ENCODE measurements at regions of chr21 and their contacts with region 1.

Region 1: GRCh38 chr21:38645282-38645681 is 147.0 kb upstream of the ERG start:
- DNase-seq: peak; percentile 96
- H3K4me3 ChIP-seq: no peak overlapping the region
- H3K27ac ChIP-seq: peak overlapping the region; percentile 95
- H3K4me1 ChIP-seq: peaks cover 26% of the 10 kb centered on the region
- H3K27me3 ChIP-seq: no peaks in the 10 kb centered on the region
- CTCF ChIP-seq: no peak

Region 2: GRCh38 chr21:38424305-38425019 is 220.8 kb before region 1 on chr21:
- CTCF ChIA-PET with region 1: no interaction called
- dilution Hi-C with region 1: no loop called
- in situ Hi-C with region 1: no loop called
- intact Hi-C with region 1: no loop called
- DNase-seq: no peak
- H3K4me3 ChIP-seq: no peak overlapping the region
- H3K27ac ChIP-seq: no peak overlapping the region
- H3K4me1 ChIP-seq: no peaks in the 10 kb centered on the region
- H3K27me3 ChIP-seq: no peaks in the 10 kb centered on the region
- CTCF ChIP-seq: no peak

Region 3: GRCh38 chr21:38478782-38479181 is 166.5 kb before region 1 on chr21:
- CTCF ChIA-PET with region 1: no interaction called
- dilution Hi-C with region 1: no loop called
- in situ Hi-C with region 1: no loop called
- intact Hi-C with region 1: loop called (anchors 1 kb)
- DNase-seq: peak; percentile 99
- H3K4me3 ChIP-seq: no peak overlapping the region
- H3K27ac ChIP-seq: peak overlapping the region; percentile 99
- H3K4me1 ChIP-seq: peaks cover 45% of the 10 kb centered on the region
- H3K27me3 ChIP-seq: no peaks in the 10 kb centered on the region
- CTCF ChIP-seq: no peak

Region 4: DNA sequence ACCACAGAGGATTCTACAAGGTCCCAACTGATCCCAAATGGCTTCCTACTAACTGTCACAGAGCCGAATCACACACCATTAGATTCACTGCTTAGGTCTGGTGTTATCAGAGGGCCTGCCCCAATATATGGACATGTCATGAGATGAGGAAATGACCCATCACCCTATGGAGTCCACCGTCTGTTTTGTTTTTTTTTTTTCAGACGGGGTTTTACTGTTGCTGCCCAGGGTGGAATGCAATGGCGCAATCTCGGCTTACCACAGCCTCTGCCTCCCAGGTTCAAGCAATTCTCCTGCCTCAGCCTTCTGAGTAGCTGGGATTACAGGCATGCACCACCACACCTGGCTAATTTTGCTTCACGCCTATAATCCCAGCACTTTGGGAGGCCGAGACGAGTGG is 76.7 kb after region 1 on chr21:
- CTCF ChIA-PET with region 1: no interaction called
- dilution Hi-C with region 1: no loop called
- in situ Hi-C with region 1: no loop called
- intact Hi-C with region 1: no loop called
- DNase-seq: no peak
- H3K4me3 ChIP-seq: no peak overlapping the region
- H3K27ac ChIP-seq: no peak overlapping the region
- H3K4me1 ChIP-seq: no peaks in the 10 kb centered on the region
- H3K27me3 ChIP-seq: no peaks in the 10 kb centered on the region
- CTCF ChIP-seq: no peak

Region 5: DNA sequence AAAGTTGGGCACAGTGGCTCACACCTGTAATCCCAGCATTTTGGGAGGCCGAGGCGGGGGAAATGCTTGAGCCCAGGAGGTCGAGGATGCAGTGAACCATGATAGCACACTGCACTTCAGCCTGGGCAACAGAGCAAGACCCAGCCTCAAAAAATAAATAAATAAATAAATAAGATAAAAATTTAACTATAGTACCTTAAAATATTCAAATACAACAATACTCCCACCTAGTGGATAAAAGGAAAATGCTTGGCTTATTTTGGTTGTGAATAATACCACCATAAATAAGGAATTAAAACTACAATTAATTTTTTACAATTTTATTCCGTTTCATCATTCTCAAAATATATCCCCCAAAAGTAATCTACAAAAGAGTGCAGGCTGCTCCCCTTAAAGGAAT is 529.9 kb after region 1 on chr21:
- CTCF ChIA-PET with region 1: no interaction called
- dilution Hi-C with region 1: no loop called
- in situ Hi-C with region 1: no loop called
- intact Hi-C with region 1: no loop called
- DNase-seq: no peak
- H3K4me3 ChIP-seq: no peak overlapping the region
- H3K27ac ChIP-seq: no peak overlapping the region
- H3K4me1 ChIP-seq: no peaks in the 10 kb centered on the region
- H3K27me3 ChIP-seq: no peaks in the 10 kb centered on the region
- CTCF ChIP-seq: peak in 1 of 2 donors; percentile 14